GM18951 (cell line): ENCODE measurements at regions of chr19 and their contacts with region 1.

Region 1: DNA sequence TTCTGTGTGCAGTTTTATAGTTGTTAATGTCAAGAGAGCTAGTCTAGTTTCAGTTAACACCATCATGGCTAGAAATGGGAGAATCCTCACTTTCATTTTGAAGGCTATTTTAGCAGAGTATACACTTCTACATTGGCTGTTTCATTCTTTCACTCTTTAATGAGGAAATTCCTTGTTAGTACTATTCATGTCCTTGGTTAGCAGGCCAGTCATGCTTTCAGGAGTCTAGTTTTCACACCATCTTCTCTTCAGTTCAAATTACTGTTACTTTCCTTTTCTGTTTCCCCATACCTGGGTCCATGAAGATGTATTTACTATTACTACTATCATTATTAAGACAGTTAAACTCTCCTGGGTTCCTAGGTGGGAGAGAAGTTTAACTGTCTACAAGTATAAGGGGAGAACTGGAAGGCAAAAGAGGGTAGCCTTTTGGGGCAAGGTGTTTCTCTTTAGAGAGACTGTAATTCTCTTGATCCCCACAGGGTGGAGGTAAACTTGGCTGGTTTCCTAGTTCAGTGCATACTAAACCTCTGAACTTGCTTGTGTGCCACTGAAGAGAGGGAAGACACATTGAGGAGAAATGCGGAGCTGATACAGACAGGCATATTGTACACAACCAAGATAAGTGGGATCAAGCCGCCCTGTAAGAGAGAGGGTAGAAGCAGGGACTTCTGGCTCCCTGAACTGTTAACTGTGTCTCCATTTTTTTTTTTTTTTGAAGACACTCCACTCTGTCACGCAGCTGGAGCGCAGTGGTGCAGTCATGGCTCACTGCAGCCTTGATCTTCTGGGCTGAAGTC is 41.3 kb upstream of the IGFL4 start:
- POLR2A ChIP-seq: no peak

Region 2: DNA sequence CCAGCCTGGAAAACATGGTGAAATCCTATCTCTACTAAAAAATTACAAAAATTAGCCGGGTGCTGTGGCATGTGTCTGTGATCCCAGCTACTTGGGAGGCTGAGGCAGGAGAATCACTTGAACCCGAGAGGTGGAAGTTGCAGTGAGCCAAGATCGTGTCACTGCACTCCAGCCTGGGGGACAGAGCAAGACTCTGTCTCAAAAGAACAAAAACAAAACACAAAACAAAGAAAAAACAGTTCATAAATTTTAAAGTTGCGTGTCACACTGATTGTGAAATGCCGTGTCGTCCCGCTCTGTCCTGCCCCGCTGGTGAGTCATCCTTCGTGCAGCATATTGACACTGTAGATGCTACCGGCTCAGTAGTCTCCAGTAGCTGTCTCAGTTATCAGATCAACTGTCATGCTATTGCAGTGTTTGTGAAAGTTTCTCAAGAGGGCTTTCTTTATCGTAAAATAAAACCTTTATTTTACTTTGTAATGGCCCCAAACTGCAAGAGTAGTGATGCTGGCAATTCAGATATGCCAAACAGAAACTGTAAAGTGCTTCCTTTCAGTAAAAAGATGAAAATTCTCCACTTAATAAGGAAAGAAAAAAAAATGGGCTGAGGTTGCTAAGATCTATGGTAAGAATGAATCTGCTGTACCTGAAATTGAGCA is 111.0 kb after region 1 on chr19:
- in situ Hi-C with region 1: loop called (anchors 5 kb)
- POLR2A ChIP-seq: no peak

Region 3: GRCh38 chr19:46265217-46265828 is 183.2 kb after region 1 on chr19:
- in situ Hi-C with region 1: loop called (anchors 10 kb)
- POLR2A ChIP-seq: no peak